CD4-positive, alpha-beta memory T cell (primary cell): ENCODE measurements at regions of chr6 and their contacts with region 1.

Region 1: GRCh38 chr6:108526739-108527174 is 34.0 kb upstream of the FOXO3 start:
- DNase-seq: peak in 2 of 5 donors; percentile 15 to 16
- H3K4me3 ChIP-seq: no peak overlapping the region
- H3K4me3 Mint-ChIP-seq: no peak overlapping the region
- H3K27ac ChIP-seq: no peak overlapping the region
- H3K27ac Mint-ChIP-seq: no peak overlapping the region
- H3K4me1 ChIP-seq: no peaks in the 10 kb centered on the region
- H3K4me1 Mint-ChIP-seq: no peaks in the 10 kb centered on the region
- H3K27me3 ChIP-seq: no peaks in the 10 kb centered on the region
- H3K27me3 Mint-ChIP-seq: no peaks in the 10 kb centered on the region

Region 2: DNA sequence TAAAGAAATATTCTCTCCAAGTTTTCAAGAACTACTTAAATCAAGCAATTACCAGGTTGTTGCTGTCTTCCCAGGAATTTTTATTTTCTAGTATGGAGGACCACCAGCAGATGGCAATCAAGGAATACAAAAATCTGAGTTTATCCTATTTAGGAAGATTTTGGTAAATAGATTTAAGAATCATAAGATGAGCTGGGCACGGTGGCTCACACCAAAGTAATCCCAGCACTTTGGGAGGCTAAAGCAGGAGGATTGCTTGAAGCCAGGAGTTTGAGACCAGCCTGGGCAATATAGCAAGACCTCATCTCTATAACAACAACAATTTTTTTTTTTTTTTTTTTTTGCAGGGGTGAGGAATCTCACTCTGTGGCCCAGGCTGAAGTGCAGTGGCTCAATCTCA is 549.5 kb before region 1 on chr6:
- CTCF ChIA-PET with region 1: interaction called, 20 read pairs
- POLR2A ChIA-PET with region 1: no interaction called
- intact Hi-C with region 1: loop called (anchors 2 kb)
- DNase-seq: no peak
- H3K4me3 ChIP-seq: no peak overlapping the region
- H3K4me3 Mint-ChIP-seq: no peak overlapping the region
- H3K27ac ChIP-seq: no peak overlapping the region
- H3K27ac Mint-ChIP-seq: peak overlapping the region in 1 of 7 donors; percentile 78
- H3K4me1 ChIP-seq: no peaks in the 10 kb centered on the region
- H3K4me1 Mint-ChIP-seq: peaks cover 0 to 6% (median 3%) of the 10 kb centered on the region in 4 donors
- H3K27me3 ChIP-seq: no peaks in the 10 kb centered on the region
- H3K27me3 Mint-ChIP-seq: peaks cover under 1% of the 10 kb centered on the region in 2 donors